Transverse colon (tissue), 4 donors: ENCODE measurements at regions of chr17 and their contacts with region 1.

Region 1: GRCh38 chr17:77772461-77772897 is 186.0 kb upstream of the TNRC6C start:
- DNase-seq: peak; percentile 69
- H3K4me3 ChIP-seq: no peak overlapping the region
- H3K27ac ChIP-seq: no peak overlapping the region
- H3K4me1 ChIP-seq: peaks cover 0 to 7% (median 0%) of the 10 kb centered on the region in 4 donors
- H3K27me3 ChIP-seq: peaks cover 6% of the 10 kb centered on the region
- CTCF ChIP-seq: peak; percentile 43 to 66 (median 63)
- EP300 ChIP-seq: no peak
- POLR2A ChIP-seq: no peak

Region 2: DNA sequence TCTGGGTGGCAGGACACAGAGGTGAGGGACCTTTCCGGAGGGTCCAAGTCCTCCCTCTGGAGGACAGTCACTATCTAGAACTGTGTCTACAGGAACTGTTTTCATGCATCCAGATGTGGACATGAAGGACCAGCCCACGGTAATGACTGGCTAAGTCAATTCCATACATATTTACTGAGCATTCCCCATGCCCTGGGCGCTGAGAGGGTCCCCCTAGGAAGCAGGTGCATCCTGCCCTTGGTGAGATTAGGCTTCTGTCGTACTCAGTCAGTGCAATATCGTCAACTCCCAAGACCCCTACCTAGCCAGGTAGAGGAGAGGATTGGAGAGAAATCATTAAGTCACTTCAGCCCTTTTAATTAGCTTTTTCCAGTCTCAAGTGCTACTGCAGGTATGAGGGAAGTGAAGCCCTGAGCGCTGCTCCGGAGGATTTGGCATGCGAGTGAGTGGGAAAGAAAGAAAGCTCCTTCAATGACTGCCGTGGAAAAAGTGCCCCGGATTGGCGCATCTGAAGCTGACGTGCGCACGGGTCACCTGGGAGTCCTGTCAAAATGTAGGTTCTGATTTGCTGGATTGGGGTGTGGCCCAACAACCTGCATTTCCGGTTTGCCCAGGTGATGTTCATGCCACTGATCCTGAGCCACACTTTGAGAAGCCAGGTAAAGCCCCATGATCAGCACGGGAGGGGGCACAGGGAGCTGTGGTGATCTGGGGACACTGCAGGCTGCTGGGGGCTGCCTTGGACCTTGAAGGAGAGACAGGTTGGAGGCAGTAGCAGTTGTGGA is 181.3 kb before region 1 on chr17:
- in situ Hi-C with region 1: no loop called
- intact Hi-C with region 1: no loop called
- DNase-seq: peak; percentile 44
- H3K4me3 ChIP-seq: no peak overlapping the region
- H3K27ac ChIP-seq: no peak overlapping the region
- H3K4me1 ChIP-seq: peaks cover 0 to 21% (median 7%) of the 10 kb centered on the region in 4 donors
- H3K27me3 ChIP-seq: no peaks in the 10 kb centered on the region
- CTCF ChIP-seq: no peak
- EP300 ChIP-seq: no peak
- POLR2A ChIP-seq: no peak

Region 3: GRCh38 chr17:78013683-78014467 is 241.4 kb after region 1 on chr17:
- in situ Hi-C with region 1: loop called in 3 of 4 experiments (anchors 5 to 10 kb)
- intact Hi-C with region 1: no loop called
- DNase-seq: peak; percentile 48
- H3K4me3 ChIP-seq: no peak overlapping the region
- H3K27ac ChIP-seq: no peak overlapping the region
- H3K4me1 ChIP-seq: peaks cover 0 to 9% (median 3%) of the 10 kb centered on the region in 4 donors
- H3K27me3 ChIP-seq: no peaks in the 10 kb centered on the region
- CTCF ChIP-seq: peak; percentile 67 to 79 (median 71)
- EP300 ChIP-seq: no peak
- POLR2A ChIP-seq: no peak

Region 4: GRCh38 chr17:78019367-78019975 is 247.0 kb after region 1 on chr17:
- in situ Hi-C with region 1: loop called in 3 of 4 experiments (anchors 5 to 10 kb)
- intact Hi-C with region 1: no loop called
- DNase-seq: no peak
- H3K4me3 ChIP-seq: no peak overlapping the region
- H3K27ac ChIP-seq: peak overlapping the region in 2 of 4 donors; percentile 10 to 39
- H3K4me1 ChIP-seq: peaks cover 0 to 4% (median 0%) of the 10 kb centered on the region in 4 donors
- H3K27me3 ChIP-seq: no peaks in the 10 kb centered on the region
- CTCF ChIP-seq: peak; percentile 49 to 63 (median 58)
- EP300 ChIP-seq: no peak
- POLR2A ChIP-seq: no peak